K562 (cell line): ENCODE measurements at regions of chr2 and their contacts with region 1.

Region 1: DNA sequence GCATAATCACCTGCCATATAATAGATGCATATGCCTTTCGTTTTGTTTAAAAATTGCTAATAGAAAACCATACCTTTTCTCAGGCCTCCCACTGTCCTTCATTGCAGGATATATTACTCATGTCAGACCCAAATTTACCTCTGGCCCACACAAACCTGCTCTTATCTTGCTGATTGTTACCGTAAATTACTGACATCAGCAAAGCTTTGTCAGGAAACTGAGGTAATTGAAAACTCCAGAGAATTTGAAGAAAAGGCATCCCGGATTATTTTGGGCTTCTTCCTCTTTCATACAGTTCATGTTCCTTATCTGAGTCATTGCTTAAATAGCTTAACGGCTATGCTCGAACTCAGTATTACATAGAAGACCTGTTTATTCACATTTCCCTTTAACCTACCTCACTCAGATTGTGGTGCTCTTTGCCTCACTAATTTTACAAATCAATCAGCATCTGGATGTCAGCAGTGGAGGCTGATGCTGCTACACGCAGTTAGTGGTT is 145.7 kb downstream of the ZEB2 start:
- DNase-seq: no peak
- ATAC-seq: no peak
- H3K4me3 ChIP-seq: no peak overlapping the region
- H3K27ac ChIP-seq: peak overlapping the region; percentile 41; the same call in 2 of the 3 replicates
- H3K4me1 ChIP-seq: peaks cover 4 to 72% of the 10 kb centered on the region in 2 experiments
- H3K27me3 ChIP-seq: no peaks in the 10 kb centered on the region
- CTCF ChIP-seq: no peak
- EP300 ChIP-seq: no peak
- POLR2A ChIP-seq: no peak
- RAD21 ChIP-seq: no peak

Region 2: GRCh38 chr2:144230448-144231085 is 143.6 kb before region 1 on chr2:
- CTCF ChIA-PET with region 1: no interaction called
- POLR2A ChIA-PET with region 1: no interaction called
- in situ Hi-C with region 1: no loop called
- intact Hi-C with region 1: loop called (anchors 5 kb)
- DNase-seq: peak in 2 of 4 experiments; percentile 30 to 41
- ATAC-seq: peak; percentile 78
- H3K4me3 ChIP-seq: no peak overlapping the region
- H3K27ac ChIP-seq: peak overlapping the region; percentile 75
- H3K4me1 ChIP-seq: peaks cover 0 to 36% of the 10 kb centered on the region in 2 experiments; a peak in 3 of 5 replicates
- H3K27me3 ChIP-seq: no peaks in the 10 kb centered on the region
- CTCF ChIP-seq: no peak
- EP300 ChIP-seq: peak; percentile 79
- POLR2A ChIP-seq: no peak
- RAD21 ChIP-seq: peak in 1 of 2 experiments; percentile 13; a peak in 2 of 4 replicates

Region 3: GRCh38 chr2:145245268-145245870 is 871.2 kb after region 1 on chr2:
- CTCF ChIA-PET with region 1: no interaction called
- POLR2A ChIA-PET with region 1: no interaction called
- in situ Hi-C with region 1: no loop called
- intact Hi-C with region 1: no loop called
- DNase-seq: no peak
- ATAC-seq: no peak
- H3K4me3 ChIP-seq: no peak overlapping the region
- H3K27ac ChIP-seq: no peak overlapping the region
- H3K4me1 ChIP-seq: no peaks in the 10 kb centered on the region
- H3K27me3 ChIP-seq: no peaks in the 10 kb centered on the region
- CTCF ChIP-seq: no peak
- EP300 ChIP-seq: no peak
- POLR2A ChIP-seq: no peak
- RAD21 ChIP-seq: no peak